Naive thymus-derived CD4-positive, alpha-beta T cell (primary cell): ENCODE measurements at regions of chr3 and their contacts with region 1.

Region 1: GRCh38 chr3:59286791-59287531 is 237.1 kb upstream of the CFAP20DC start:
- DNase-seq: peak in 1 of 9 donors; percentile 54
- ATAC-seq: peak; percentile 80
- H3K4me3 ChIP-seq: no peak overlapping the region
- H3K4me3 Mint-ChIP-seq: peak overlapping the region in 1 of 10 donors; percentile 29
- H3K27ac ChIP-seq: no peak overlapping the region
- H3K27ac Mint-ChIP-seq: peak overlapping the region in 1 of 9 donors; percentile 84
- H3K4me1 ChIP-seq: no peaks in the 10 kb centered on the region
- H3K4me1 Mint-ChIP-seq: peaks cover 3 to 33% (median 11%) of the 10 kb centered on the region in 7 donors
- H3K27me3 ChIP-seq: no peaks in the 10 kb centered on the region
- H3K27me3 Mint-ChIP-seq: peaks cover 0 to 6% (median 0%) of the 10 kb centered on the region in 5 donors

Region 2: DNA sequence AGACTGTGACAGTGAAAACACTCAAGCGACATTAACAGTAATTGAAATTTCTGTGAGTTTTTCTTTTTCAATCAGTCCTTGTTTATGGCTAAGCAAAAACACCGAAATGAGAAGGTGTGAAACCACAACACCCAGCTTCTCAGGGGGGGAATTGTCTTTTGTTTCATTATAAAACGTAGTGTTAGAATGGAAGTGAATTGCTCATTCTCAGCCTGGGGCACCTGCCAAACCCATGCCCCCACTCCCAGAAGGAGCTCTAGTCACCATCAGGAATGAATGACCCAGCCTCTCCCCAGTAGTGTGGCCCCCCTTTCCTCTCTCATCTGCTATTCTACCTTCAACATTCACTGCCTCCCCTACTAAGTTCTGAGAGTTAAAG is 51.3 kb before region 1 on chr3:
- CTCF ChIA-PET with region 1: no interaction called
- POLR2A ChIA-PET with region 1: no interaction called
- intact Hi-C with region 1: loop called in 1 of 2 experiments (anchors 5 kb)
- DNase-seq: peak in 1 of 9 donors; percentile 44
- ATAC-seq: no peak
- H3K4me3 ChIP-seq: no peak overlapping the region
- H3K4me3 Mint-ChIP-seq: no peak overlapping the region
- H3K27ac ChIP-seq: no peak overlapping the region
- H3K27ac Mint-ChIP-seq: peak overlapping the region in 1 of 9 donors; percentile 36
- H3K4me1 ChIP-seq: peaks cover 0 to 11% of the 10 kb centered on the region in 2 donors
- H3K4me1 Mint-ChIP-seq: peaks cover 0 to 15% (median 0%) of the 10 kb centered on the region in 7 donors
- H3K27me3 ChIP-seq: no peaks in the 10 kb centered on the region
- H3K27me3 Mint-ChIP-seq: peaks cover 0 to 10% (median 4%) of the 10 kb centered on the region in 5 donors